A549 (cell line): ENCODE measurements at regions of chr12 and their contacts with region 1.

Region 1: DNA sequence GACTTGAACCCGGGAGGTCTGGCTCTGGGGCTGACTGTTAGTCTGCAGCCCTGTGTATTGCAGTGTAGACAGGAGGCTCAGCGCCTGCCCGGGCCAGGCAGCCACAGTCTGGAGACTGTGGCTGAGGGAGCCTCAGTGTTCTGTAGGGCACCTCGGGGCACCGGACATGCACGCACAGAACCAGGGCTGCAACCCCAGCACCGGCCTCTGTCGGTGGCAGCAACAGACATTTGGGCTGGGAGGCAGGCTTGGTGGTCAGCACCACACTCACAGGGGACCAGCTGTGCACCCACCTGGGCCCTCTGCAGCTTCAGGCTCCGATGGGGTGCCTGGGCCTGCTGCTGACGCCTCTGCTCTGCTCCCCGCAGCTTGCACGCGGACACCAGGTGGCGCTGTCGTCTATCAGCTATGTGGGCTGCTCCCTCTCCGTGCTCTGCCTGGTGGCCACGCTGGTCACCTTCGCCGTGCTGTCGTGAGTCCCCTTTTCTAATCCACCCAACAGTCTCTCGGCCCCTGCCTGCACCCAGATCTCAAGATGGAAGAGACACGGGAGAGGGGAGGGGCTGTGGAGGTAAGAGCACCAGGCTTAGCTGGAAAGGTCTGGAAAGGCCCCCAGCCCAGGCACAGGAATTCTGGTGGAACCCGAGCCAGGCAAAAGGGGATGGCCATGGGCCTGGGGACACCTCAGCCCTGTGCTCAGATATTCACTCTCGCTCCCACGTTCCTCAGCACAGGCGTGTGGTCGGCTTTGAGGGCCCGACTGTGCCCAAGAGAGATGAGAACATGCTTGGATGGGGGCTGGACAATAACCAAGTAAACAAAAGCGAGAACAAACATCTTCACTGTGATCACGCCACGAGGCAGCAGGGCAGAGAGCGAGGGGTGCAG is 151.0 kb downstream of the ADGRD1 start:
- DNase-seq: peak; percentile 77 to 82
- ATAC-seq: peak; percentile 95 to 99
- H3K4me3 ChIP-seq: no peak overlapping the region
- H3K27ac ChIP-seq: peak overlapping the region; percentile 57 to 79; a peak in 4 of 6 replicates
- H3K4me1 ChIP-seq: peaks cover 4% of the 10 kb centered on the region; the same call in 2 of the 3 replicates
- CTCF ChIP-seq: peak; percentile 90
- EP300 ChIP-seq: no peak
- POLR2A ChIP-seq: no peak
- RAD21 ChIP-seq: peak; percentile 94 to 96

Region 2: DNA sequence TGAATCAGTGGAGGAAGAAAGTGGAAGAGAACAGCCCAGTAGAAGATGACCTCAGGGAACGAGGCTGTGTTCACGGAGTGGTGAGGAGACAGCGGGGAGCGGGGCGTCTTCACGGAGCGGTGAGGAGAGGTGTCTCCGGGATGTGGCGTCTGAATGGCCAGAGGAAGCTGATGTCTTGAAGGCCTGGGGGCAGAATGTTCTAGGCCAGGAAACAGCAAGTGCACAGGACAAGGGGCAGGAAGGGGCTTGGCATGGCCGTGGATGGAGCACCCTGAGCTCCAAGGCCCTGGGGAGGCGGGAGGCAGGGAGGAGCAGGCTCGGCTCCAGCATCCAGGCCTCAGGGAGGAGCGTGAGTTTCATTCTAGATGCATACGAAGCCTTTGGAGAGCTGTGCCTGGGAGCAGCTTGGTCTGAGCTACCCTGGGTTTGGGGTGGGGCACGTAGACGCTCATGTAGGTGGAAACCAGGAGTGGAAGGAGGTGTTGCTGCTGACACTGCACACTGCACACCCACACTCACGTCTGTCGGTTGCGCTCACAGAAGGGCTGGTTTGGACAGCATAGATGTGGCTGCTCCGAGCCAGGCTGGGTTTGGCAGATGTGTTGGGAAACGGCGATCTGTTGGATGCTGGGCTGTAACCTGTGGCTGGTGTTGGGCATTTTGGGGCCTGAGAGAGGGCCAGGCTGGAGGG is 19.4 kb before region 1 on chr12:
- CTCF ChIA-PET with region 1: interaction called, 11 read pairs
- POLR2A ChIA-PET with region 1: no interaction called
- DNase-seq: no peak
- ATAC-seq: peak in 1 of 2 experiments; percentile 20; a peak in 2 of 6 replicates
- H3K4me3 ChIP-seq: no peak overlapping the region
- H3K27ac ChIP-seq: no peak overlapping the region
- H3K4me1 ChIP-seq: no peaks in the 10 kb centered on the region
- CTCF ChIP-seq: no peak
- EP300 ChIP-seq: no peak
- POLR2A ChIP-seq: no peak
- RAD21 ChIP-seq: no peak

Region 3: GRCh38 chr12:131116391-131117117 is 11.8 kb after region 1 on chr12:
- CTCF ChIA-PET with region 1: interaction called, 89 read pairs
- POLR2A ChIA-PET with region 1: no interaction called
- DNase-seq: peak; percentile 36 to 45
- ATAC-seq: peak; percentile 60 to 83; a peak in 5 of 6 replicates
- H3K4me3 ChIP-seq: no peak overlapping the region
- H3K27ac ChIP-seq: no peak overlapping the region; a peak in 1 of 6 replicates
- H3K4me1 ChIP-seq: peaks cover 16% of the 10 kb centered on the region
- CTCF ChIP-seq: peak; percentile 56
- EP300 ChIP-seq: no peak
- POLR2A ChIP-seq: no peak
- RAD21 ChIP-seq: peak; percentile 76 to 84

Region 4: DNA sequence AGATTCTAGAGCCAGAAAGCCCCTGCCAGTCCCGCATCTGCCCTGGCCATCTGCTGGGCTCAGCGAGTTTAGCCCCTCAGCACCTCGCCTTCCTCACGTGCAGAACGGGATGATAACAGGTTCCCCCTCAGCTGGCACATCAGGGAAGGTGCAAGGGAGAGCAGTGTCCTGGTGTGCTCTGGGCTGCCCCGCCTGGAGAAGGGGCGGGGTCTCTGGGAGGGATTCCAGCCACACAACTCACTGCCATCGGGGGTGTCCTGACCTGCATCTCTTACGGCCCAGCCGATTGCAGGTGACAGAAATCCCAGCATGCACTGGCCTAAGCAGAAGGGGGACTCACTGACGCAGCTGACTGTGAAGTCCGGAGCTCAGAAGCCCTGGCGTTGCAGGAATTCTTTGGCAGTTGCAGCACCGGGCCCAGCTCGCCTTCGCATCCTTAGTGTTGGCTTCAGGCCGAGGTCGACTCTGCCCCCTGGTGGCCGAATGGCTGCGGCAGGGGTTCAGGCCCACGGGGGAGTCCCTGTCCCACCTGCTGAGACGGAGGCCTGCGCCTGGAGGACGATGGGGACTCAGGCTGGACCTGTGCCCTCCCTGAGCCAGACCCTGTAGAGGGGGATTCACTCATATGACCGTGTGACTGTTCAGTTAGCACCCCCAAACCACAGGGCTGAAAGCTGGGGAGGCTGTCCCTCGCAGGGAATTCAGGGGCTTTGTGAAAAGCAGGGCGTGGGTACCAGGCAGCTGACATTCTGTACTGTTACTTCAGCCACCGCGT is 27.6 kb after region 1 on chr12:
- CTCF ChIA-PET with region 1: interaction called, 80 read pairs
- POLR2A ChIA-PET with region 1: no interaction called
- DNase-seq: peak; percentile 73 to 79
- ATAC-seq: peak; percentile 78 to 92
- H3K4me3 ChIP-seq: no peak overlapping the region
- H3K27ac ChIP-seq: 0 out of 6 replicates have a peak overlapping the region, but pooled peaks of 1 of the 2 experiments have one; percentile 3
- H3K4me1 ChIP-seq: peaks cover 17% of the 10 kb centered on the region; the same call in 2 of the 3 replicates
- CTCF ChIP-seq: peak; percentile 71
- EP300 ChIP-seq: no peak
- POLR2A ChIP-seq: no peak
- RAD21 ChIP-seq: peak; percentile 61 to 63

Region 5: DNA sequence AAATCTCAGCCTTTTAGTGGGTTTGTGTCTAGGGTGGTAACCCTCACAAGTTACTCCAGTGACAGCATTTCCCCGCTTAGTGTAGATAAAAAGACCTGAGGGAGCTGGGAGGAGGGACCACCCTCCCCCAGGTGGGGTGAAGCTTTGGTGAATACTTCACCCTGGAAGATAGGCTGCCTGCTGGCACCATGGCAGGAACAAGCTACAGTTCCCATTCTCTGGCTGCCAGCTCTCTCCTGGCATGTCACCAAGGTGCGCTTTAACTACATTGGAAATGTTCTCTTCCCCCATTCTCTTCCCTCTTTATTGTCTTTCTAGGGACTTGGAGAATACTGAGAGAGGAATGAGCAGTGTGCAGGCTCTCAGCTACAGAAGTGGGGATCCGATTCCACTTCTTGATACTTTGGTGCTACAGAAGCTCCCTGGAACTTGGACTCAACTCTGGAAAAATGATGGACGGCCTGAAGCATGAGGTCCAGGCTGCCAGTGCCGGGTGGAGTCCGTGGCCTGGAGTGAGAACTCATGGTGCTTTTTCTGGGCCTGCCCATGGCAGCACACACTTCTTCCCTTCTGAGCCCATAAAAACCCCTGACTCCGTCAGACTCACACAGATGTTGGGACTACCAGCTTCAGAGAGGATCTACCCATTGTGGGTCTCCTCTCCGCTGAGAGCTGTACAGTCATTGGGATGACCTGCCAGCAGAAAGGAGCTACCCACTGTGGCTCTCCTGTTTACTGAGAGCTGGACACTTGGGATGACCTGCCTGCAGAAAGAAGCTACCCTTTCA is 47.0 kb after region 1 on chr12:
- CTCF ChIA-PET with region 1: interaction called, 12 read pairs
- POLR2A ChIA-PET with region 1: no interaction called
- DNase-seq: no peak
- ATAC-seq: no peak; a peak in 1 of 6 replicates
- H3K4me3 ChIP-seq: no peak overlapping the region
- H3K27ac ChIP-seq: no peak overlapping the region
- H3K4me1 ChIP-seq: no peaks in the 10 kb centered on the region
- CTCF ChIP-seq: no peak
- EP300 ChIP-seq: no peak
- POLR2A ChIP-seq: no peak
- RAD21 ChIP-seq: no peak

Region 6: GRCh38 chr12:131194166-131194565 is 89.5 kb after region 1 on chr12:
- CTCF ChIA-PET with region 1: no interaction called
- POLR2A ChIA-PET with region 1: no interaction called
- DNase-seq: peak; percentile 13 to 63
- ATAC-seq: peak in 1 of 2 experiments; percentile 47; a peak in 3 of 6 replicates
- H3K4me3 ChIP-seq: no peak overlapping the region
- H3K27ac ChIP-seq: no peak overlapping the region
- H3K4me1 ChIP-seq: no peaks in the 10 kb centered on the region
- CTCF ChIP-seq: no peak
- EP300 ChIP-seq: no peak
- POLR2A ChIP-seq: no peak
- RAD21 ChIP-seq: no peak

Region 7: DNA sequence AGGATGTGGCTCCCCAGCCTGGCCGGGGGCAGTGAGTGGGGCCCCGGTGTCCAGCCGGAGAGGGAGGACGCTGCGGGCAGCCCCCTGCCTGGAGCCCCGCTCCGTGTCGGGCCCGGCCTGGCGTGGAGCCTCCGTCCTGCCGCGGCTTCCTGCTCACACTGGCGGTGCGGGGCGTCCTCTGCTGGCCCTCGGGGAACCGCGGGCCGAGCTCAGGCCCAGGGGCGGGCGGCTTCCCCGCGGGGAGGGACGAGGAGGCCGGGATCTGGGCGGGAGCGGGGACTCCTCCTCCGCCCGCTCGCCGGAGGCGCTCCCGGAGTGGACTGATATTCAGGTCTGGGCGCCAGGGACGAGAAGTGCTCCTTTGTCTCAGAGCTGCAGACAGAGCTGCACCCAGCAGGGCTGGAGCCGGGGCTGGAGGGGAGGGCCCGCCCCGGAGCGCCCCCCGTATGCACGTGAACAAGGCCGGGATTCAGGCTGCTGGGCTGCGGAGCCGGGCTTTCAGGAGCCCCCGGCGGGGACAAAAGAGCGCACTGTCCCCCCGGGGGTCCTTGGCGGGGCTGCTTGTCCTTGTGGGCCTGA is 725.7 kb after region 1 on chr12:
- CTCF ChIA-PET with region 1: interaction called, 61 read pairs
- POLR2A ChIA-PET with region 1: no interaction called
- DNase-seq: peak; percentile 58 to 86
- ATAC-seq: peak; percentile 48 to 81
- H3K4me3 ChIP-seq: peak overlapping the region; percentile 91
- H3K27ac ChIP-seq: peak overlapping the region; percentile 89 to 91
- H3K4me1 ChIP-seq: peaks cover 31% of the 10 kb centered on the region
- CTCF ChIP-seq: peak; percentile 80
- EP300 ChIP-seq: no peak
- POLR2A ChIP-seq: peak; percentile 44
- RAD21 ChIP-seq: peak; percentile 75 to 89